Activated B cell treated with CpG ODN at 0.5 μM for 24 hours (primary cell): ENCODE measurements at regions of chr3 and their contacts with region 1.

Region 1: DNA sequence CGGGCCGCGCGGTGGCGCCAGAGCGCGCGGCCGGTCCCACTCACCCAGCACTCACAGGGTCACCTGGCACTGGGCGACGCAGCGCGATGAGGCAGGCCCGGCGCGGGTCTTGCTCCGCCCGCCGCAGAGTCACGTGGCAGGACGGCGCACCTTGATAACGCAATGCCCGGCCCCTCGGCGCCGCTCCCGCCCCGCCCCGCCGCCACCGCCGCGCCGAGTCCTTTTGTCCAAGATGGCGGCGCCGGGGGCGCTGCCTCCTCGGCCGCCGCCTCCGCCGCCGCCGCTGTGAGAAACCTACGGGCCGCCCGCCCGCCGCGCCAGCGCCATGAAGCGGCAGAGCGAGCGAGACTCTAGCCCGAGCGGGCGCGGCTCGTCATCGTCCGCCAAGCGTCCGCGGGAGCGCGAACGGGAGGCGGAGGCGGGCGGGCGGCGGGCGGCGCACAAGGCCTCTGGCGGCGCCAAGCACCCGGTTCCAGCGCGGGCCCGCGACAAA is at the start of gene RBM15B:
- DNase-seq: peak; percentile 97
- ATAC-seq: peak; percentile 94
- H3K4me3 Mint-ChIP-seq: peak within 1 kb of the TSS; percentile 82
- H3K27ac Mint-ChIP-seq: peak within 1 kb of the TSS; percentile 73
- H3K4me1 Mint-ChIP-seq: peaks cover 60% of the 10 kb centered on the region
- H3K27me3 Mint-ChIP-seq: no peaks in the 10 kb centered on the region
- CTCF ChIP-seq: no peak
- total RNA-seq, gene RBM15B: 28.0 and 28.9 TPM in 2 replicates

Region 2: DNA sequence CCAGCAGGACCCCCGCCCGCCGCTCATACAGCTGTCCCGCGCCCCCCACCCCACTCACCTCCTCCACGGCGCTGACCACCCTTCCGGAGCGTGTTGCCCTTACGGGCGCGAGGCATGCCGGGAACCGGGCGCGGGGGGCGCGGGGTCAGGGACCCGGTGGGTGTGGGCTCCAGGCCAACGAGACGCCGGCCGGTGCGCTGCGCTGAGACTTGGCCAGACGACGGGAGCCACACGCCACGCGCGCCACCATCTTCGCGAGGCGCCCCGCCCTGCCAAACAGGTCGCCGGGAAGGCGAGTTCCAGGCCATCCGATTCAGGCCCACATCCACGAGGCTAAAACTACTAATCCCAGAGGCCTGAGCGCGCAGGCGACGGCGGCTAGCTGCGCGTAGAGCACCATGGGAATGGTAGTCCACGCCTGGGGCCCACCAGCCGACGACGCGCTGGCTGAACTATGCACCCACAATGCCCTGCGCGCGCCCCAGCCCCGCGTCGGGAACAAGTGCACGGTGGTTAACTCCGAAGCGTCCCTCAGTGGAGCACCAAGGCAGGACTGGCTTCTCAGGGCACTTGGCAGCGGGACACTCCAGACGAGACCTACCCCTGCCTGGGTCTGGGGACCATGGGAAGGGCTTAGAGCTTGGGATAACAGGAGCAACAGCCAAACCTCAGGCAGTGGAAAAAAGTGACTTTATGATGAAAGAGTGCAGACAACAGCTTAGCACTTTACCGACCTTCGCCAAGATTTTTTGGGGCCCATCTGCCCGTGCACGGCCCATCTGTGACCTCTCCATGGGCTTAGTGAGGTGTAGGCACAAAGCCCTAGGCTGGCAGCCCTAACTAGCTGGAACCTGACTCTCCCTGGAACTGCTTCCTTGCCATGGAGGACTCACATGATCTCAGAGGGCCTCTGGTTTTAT is 1098.7 kb before region 1 on chr3 and contains the start of gene IFRD2:
- CTCF ChIA-PET with region 1: no interaction called
- POLR2A ChIA-PET with region 1: no interaction called
- intact Hi-C with region 1: loop called (anchors 1 kb)
- DNase-seq: peak; percentile 87
- ATAC-seq: peak; percentile 99
- H3K4me3 Mint-ChIP-seq: peak within 1 kb of the TSS; percentile 86
- H3K27ac Mint-ChIP-seq: peak within 1 kb of the TSS; percentile 95
- H3K4me1 Mint-ChIP-seq: peaks cover 20% of the 10 kb centered on the region
- H3K27me3 Mint-ChIP-seq: no peaks in the 10 kb centered on the region
- CTCF ChIP-seq: no peak
- total RNA-seq, gene IFRD2: 92.2 and 105 TPM in 2 replicates

Region 3: GRCh38 chr3:51538459-51539290 is 147.6 kb after region 1 on chr3 and contains the start of gene RAD54L2:
- CTCF ChIA-PET with region 1: no interaction called
- POLR2A ChIA-PET with region 1: interaction called, 10 read pairs
- intact Hi-C with region 1: no loop called
- DNase-seq: peak; percentile 80
- ATAC-seq: peak; percentile 90
- H3K4me3 Mint-ChIP-seq: peak within 1 kb of the TSS; percentile 90
- H3K27ac Mint-ChIP-seq: peak within 1 kb of the TSS; percentile 91
- H3K4me1 Mint-ChIP-seq: peaks cover 45% of the 10 kb centered on the region
- H3K27me3 Mint-ChIP-seq: no peaks in the 10 kb centered on the region
- CTCF ChIP-seq: no peak
- total RNA-seq, gene RAD54L2: 34.3 and 39.3 TPM in 2 replicates

Region 4: DNA sequence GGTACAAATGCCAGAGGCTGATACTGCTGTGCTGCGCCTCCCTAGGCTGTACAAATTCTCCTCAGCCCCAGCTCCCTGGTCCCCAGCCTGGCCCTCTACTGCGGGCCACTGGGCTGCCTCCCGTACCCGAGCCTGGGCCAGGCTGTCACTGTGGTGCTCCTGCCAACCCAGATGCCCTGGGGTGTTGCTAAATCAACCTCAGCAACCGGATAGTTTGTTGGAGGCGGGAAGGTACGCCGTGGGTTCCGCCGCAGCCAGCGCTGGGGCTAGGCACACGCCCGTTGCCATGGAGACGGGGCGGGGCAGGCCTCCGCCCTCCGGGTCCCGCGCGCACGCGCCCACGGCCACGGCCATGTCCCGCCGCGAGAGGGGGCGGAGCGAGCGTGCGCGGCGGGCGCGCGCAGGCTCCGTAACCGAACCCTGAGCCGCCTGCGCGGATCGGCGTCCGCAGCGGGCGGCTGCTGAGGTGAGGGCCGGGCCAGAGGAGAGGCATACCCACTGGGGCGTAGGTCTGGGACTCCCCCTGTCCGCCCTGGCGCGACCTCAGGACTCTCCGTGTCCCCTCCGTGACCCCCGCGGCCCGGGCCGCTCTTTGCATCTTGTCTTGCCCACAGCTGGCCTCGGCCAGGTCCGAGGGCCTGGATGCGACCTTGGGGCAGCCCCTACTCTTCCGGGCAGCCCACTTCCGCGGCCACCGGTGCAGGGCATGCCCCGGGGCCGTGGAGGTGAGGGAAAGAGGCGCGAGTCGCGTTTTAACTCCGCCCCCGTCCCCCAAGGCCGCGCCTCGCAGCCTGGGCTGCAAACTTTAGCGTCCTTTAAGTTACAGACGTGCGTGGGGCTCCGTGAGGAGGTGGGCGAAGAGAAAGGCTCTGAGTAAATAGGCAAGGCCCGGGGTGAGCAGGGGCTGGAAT is 280.0 kb after region 1 on chr3 and contains the start of gene TEX264:
- CTCF ChIA-PET with region 1: interaction called, 3 read pairs
- POLR2A ChIA-PET with region 1: interaction called, 6 read pairs
- intact Hi-C with region 1: loop called (anchors 1 kb)
- DNase-seq: peak; percentile 95
- ATAC-seq: peak; percentile 85
- H3K4me3 Mint-ChIP-seq: peak within 1 kb of the TSS; percentile 89
- H3K27ac Mint-ChIP-seq: peak within 1 kb of the TSS; percentile 89
- H3K4me1 Mint-ChIP-seq: peaks cover 55% of the 10 kb centered on the region
- H3K27me3 Mint-ChIP-seq: no peaks in the 10 kb centered on the region
- CTCF ChIP-seq: no peak
- total RNA-seq, gene TEX264: 24.1 and 24.4 TPM in 2 replicates

Region 5: GRCh38 chr3:51682079-51682478 is 291.0 kb after region 1 on chr3:
- CTCF ChIA-PET with region 1: interaction called, 15 read pairs
- POLR2A ChIA-PET with region 1: interaction called, 15 read pairs
- intact Hi-C with region 1: loop called (anchors 1 kb)
- DNase-seq: peak; percentile 40
- ATAC-seq: peak; percentile 87
- H3K4me3 Mint-ChIP-seq: peak overlapping the region; percentile 12
- H3K27ac Mint-ChIP-seq: peak overlapping the region; percentile 73
- H3K4me1 Mint-ChIP-seq: peaks cover 82% of the 10 kb centered on the region
- H3K27me3 Mint-ChIP-seq: no peaks in the 10 kb centered on the region
- CTCF ChIP-seq: no peak

Region 6: DNA sequence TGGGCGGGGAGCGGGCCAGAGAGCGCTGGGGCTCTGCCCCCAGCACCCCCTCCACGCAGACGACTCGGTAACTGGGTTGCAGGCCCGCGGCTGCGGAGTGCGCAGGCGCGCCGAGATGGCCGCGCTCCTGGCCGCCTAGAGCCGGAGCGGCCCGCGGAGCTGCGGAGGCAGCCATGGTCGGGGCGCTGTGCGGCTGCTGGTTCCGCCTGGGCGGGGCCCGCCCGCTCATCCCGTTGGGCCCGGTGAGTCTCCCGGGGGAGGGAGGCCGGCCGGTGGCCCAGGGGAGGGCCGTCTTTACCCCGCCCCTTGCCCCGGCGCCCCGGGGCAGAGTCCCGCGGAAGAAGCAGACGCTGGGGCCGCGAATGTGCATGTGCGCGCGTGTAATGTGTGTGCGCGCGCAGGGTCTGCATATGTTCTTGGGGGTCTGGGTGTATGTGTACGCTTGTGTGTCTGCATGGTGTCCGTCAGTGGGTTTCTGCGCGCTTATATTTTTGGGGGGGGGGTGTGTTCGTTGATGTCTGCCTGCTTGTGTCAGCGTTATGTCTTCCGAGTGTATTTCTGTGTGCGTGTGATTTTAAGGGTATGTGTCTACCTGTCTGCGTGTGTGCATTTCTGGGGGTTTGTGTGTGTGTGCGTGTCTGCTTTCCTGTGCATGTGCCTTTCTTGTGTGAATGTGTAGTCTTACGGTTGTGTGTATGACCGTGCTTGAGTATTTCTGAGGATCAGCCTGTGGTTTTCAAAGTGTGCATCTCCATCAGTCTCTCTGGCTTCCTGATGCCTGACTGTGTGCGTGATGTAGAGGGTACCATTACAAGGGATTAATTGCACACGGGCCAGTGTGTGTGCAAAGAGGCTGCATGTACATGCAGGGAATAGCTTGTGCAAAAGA is 584.1 kb after region 1 on chr3 and contains the start of gene ABHD14A:
- CTCF ChIA-PET with region 1: no interaction called
- POLR2A ChIA-PET with region 1: no interaction called
- intact Hi-C with region 1: loop called (anchors 2 kb)
- DNase-seq: peak; percentile 74
- ATAC-seq: peak; percentile 76
- H3K4me3 Mint-ChIP-seq: peak within 1 kb of the TSS; percentile 98
- H3K27ac Mint-ChIP-seq: peak within 1 kb of the TSS; percentile 91
- H3K4me1 Mint-ChIP-seq: peaks cover 28% of the 10 kb centered on the region
- H3K27me3 Mint-ChIP-seq: no peaks in the 10 kb centered on the region
- CTCF ChIP-seq: no peak
- total RNA-seq, gene ABHD14A: 5.1 and 5.2 TPM in 2 replicates